ENCODE measurements at regions of chr15 and their contacts with region 1.

Region 1: GRCh38 chr15:68192804-68193486 is 12.2 kb downstream of the CALML4 start:
- DNase-seq: peak in 1 of 10 donors; percentile 83

Region 2: DNA sequence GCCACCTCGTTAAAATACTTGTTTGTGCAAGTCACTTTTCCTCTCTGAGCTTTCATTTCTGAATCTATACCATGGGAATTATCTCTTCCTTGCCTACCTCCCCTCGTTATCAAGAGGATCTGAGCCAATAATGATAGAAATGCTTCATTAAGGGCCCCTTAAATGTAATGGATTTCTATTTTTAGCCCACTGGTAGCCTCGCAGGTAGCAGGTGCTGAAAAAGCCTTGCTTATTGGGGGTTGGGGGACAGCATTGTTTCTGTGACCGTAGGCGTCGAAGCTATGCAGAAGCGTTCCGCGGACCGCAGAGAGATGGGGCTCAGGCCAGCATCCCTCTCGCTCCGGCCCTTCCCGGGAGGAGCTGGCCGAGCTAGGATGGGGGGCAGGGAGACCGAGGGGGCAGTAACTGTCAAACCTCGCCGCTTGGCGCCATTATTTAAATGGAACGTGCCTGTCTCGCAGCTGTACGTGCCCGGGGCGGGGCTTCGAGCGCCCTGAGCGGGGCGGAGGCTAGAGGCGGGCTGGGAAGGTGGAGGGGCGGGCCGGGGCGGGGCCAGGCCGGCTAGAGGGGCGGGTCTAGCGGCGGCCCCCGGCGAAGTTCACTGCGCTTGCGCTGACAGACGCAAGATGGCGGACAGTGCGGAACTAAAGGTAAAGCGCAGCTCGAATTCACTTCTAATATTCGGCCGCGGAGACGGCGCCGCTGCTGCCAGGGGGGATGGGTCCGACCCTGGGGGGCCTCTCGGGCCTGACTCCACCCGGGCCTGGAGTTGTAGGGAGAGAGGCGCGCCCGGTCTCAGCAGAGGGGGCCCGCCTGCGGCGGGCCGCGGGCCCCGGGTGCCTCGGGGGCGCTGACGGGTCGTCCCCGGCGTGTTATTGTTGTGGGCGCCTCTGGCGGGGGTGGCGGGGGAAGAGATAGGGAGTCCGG is 139.0 kb before region 1 on chr15 and contains the start of gene PIAS1:
- intact Hi-C with region 1: loop called (anchors 10 kb)
- DNase-seq: peak; percentile 89 to 99 (median 95)

Region 3: GRCh38 chr15:68080783-68081182 is 112.2 kb before region 1 on chr15:
- intact Hi-C with region 1: no loop called
- DNase-seq: no peak

Region 4: DNA sequence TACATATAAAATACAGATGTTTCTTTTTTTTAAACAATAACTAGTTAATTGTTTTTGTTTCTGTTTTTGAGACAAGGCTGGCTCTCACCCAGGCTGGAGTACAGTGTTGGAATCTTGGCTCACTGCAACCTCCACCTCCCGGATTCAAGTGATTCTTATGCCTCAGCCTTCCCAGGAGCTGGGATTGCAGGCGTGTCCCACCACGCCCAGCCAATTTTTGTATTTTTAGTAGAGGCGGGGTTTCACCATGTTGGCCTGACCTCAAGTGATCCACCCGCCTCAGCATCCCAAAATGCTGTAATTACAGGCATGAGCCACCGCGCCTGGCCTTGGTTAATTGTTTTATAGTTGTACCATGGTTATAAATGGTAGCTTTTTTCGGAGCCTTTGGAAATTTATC is 66.5 kb before region 1 on chr15:
- intact Hi-C with region 1: no loop called
- DNase-seq: no peak

Region 5: GRCh38 chr15:68252925-68253534 is 60.1 kb after region 1 on chr15:
- intact Hi-C with region 1: no loop called
- DNase-seq: peak in 1 of 10 donors; percentile 35

Measured in posterior cingulate gyrus (tissue), 11 donors.